GM12878 (cell line): ENCODE measurements at regions of chr4 and their contacts with region 1.

Region 1: GRCh38 chr4:10509730-10510129 is 52.5 kb upstream of the ZNF518B start:
- DNase-seq: no peak
- ATAC-seq: no peak
- H3K4me3 ChIP-seq: no peak overlapping the region
- H3K27ac ChIP-seq: no peak overlapping the region
- H3K4me1 ChIP-seq: no peaks in the 10 kb centered on the region
- H3K27me3 ChIP-seq: no peaks in the 10 kb centered on the region
- CTCF ChIP-seq: no peak
- EP300 ChIP-seq: no peak
- POLR2A ChIP-seq: no peak
- RAD21 ChIP-seq: no peak

Region 2: DNA sequence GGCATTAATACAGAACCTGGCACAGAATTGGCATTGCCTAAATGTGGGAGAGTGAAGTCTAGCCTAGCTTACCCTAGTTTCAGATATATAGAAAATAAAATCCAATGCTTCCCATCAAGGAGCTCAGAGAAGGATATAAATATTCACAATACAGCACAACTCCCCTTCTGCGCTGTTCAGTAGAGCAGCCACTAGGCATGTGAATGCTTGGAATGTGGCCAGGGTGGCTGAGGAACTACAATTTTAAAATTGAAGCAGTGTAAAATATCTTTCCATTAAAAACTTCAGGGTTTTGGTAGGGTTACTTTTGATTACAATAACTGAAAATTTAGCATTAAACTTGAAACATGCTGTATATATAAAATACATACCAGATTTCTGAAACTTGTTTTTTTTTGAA is 72.0 kb before region 1 on chr4:
- CTCF ChIA-PET with region 1: no interaction called
- POLR2A ChIA-PET with region 1: no interaction called
- RAD21 ChIA-PET with region 1: no interaction called
- SMC1A ChIA-PET with region 1: no interaction called
- in situ Hi-C with region 1: no loop called
- intact Hi-C with region 1: loop called (anchors 2 kb)
- DNase-seq: no peak
- ATAC-seq: no peak
- H3K4me3 ChIP-seq: no peak overlapping the region
- H3K27ac ChIP-seq: no peak overlapping the region
- H3K4me1 ChIP-seq: no peaks in the 10 kb centered on the region
- H3K27me3 ChIP-seq: no peaks in the 10 kb centered on the region
- CTCF ChIP-seq: no peak
- EP300 ChIP-seq: no peak
- POLR2A ChIP-seq: no peak
- RAD21 ChIP-seq: no peak